ENCODE measurements at regions of chr19 and their contacts with region 1.

Region 1: GRCh38 chr19:9528757-9529336 is 9.6 kb downstream of the ZNF426 start:
- DNase-seq: no peak
- ATAC-seq: no peak
- H3K4me3 ChIP-seq: no peak overlapping the region
- H3K4me3 Mint-ChIP-seq: no peak overlapping the region
- H3K27ac ChIP-seq: no peak overlapping the region
- H3K27ac Mint-ChIP-seq: no peak overlapping the region
- H3K4me1 ChIP-seq: no peaks in the 10 kb centered on the region
- H3K4me1 Mint-ChIP-seq: no peaks in the 10 kb centered on the region
- H3K27me3 ChIP-seq: no peaks in the 10 kb centered on the region
- H3K27me3 Mint-ChIP-seq: no peaks in the 10 kb centered on the region
- CTCF ChIP-seq: no peak

Region 2: DNA sequence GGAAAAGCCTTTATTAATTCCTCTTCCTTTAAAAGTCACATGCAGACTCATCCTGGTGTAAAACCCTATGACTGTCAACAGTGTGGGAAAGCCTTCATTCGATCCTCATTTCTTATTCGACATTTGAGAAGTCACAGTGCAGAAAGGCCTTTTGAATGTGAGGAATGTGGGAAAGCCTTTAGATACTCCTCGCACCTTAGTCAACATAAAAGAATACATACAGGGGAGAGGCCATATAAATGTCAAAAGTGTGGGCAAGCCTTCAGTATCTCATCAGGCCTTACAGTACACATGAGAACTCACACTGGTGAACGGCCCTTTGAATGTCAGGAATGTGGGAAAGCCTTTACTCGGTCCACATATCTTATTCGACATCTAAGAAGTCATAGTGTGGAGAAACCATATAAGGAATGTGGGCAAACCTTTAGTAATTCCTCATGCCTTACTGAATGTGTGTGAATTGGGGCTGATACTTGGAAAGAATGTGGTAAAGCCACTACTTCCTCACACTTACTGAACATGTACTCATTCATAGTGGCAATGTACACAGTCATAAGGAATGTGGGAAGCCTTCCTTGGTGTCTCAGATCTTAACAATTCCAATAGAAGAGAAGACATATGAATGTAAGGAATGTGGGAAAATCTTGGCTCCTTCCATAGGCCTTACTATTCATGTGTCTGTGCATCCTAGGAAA is 186.1 kb before region 1 on chr19:
- CTCF ChIA-PET with region 1: no interaction called
- POLR2A ChIA-PET with region 1: no interaction called
- intact Hi-C with region 1: loop called in 1 of 2 experiments (anchors 5 kb)
- DNase-seq: no peak
- ATAC-seq: no peak
- H3K4me3 ChIP-seq: no peak overlapping the region
- H3K4me3 Mint-ChIP-seq: no peak overlapping the region
- H3K27ac ChIP-seq: no peak overlapping the region
- H3K27ac Mint-ChIP-seq: no peak overlapping the region
- H3K4me1 ChIP-seq: no peaks in the 10 kb centered on the region
- H3K4me1 Mint-ChIP-seq: no peaks in the 10 kb centered on the region
- H3K27me3 ChIP-seq: no peaks in the 10 kb centered on the region
- H3K27me3 Mint-ChIP-seq: no peaks in the 10 kb centered on the region
- CTCF ChIP-seq: no peak

Region 3: DNA sequence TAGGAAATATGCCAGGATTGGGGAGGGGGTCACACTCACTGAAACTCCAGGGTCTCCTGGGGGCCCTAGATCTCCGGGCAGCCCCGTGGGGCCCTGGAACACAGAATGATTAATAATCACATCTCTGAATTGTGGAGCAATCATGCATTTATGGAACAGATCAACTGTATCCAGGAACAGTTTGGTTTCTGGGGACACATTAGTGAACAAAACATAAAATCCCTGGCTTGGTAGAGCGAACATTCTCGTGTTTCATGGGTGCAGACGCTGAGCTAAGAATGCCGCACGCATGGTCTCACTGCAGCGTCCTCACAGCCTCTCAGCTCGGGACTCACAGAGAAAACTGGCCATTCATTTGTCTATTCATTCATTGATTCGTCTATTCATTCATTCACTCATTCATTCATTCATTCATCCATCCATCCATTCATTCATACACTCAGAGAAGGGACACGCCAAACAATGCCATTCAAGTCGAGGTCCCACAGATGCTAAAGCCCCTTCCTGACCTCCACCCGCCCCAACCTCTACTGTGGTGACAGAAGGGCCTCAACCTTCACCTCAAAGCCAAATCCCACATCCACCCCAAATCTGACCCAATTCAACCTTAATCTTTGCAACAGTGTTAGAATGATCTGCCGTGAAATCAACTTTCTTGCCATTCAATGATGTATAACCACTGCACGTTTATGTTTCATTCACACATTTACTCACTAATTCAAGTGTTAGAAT is 442.5 kb after region 1 on chr19:
- CTCF ChIA-PET with region 1: no interaction called
- POLR2A ChIA-PET with region 1: no interaction called
- intact Hi-C with region 1: no loop called
- DNase-seq: no peak
- ATAC-seq: no peak
- H3K4me3 ChIP-seq: no peak overlapping the region
- H3K4me3 Mint-ChIP-seq: no peak overlapping the region
- H3K27ac ChIP-seq: no peak overlapping the region
- H3K27ac Mint-ChIP-seq: no peak overlapping the region
- H3K4me1 ChIP-seq: no peaks in the 10 kb centered on the region
- H3K4me1 Mint-ChIP-seq: no peaks in the 10 kb centered on the region
- H3K27me3 ChIP-seq: peaks cover 6 to 19% of the 10 kb centered on the region in 2 experiments
- H3K27me3 Mint-ChIP-seq: peaks cover 39% of the 10 kb centered on the region
- CTCF ChIP-seq: no peak